MCF 10A (cell line): ENCODE measurements at regions of chr17 and their contacts with region 1.

Region 1: DNA sequence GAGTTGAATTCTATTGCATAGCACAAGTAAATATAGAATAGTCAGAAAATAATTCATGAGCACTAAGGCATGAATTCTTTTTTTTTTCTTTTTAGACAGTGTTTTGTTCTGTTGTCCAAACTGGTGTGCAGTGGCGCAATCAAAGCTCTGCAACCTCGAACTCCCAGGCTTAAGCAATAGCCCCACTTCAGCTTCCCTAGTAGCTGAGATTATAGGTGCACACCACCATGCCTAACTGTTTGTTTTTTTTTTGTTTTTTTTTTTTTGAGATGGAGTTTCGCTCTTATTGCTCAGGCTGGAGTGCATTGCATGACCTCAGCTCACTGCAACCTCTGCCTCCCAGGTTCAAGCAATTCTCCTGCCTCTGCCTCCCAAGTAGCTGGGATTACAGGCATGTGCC is 16.6 kb downstream of the TUBD1 start:
- DNase-seq: peak; percentile 38
- H3K4me3 Mint-ChIP-seq: no peak overlapping the region
- H3K27ac Mint-ChIP-seq: no peak overlapping the region
- H3K4me1 Mint-ChIP-seq: no peaks in the 10 kb centered on the region
- H3K27me3 Mint-ChIP-seq: no peaks in the 10 kb centered on the region
- CTCF ChIP-seq: no peak

Region 2: GRCh38 chr17:59791603-59792457 is 84.3 kb before region 1 on chr17:
- CTCF ChIA-PET with region 1: no interaction called
- POLR2A ChIA-PET with region 1: no interaction called
- intact Hi-C with region 1: no loop called
- DNase-seq: no peak
- H3K4me3 Mint-ChIP-seq: no peak overlapping the region
- H3K27ac Mint-ChIP-seq: no peak overlapping the region
- H3K4me1 Mint-ChIP-seq: peaks cover 6% of the 10 kb centered on the region
- H3K27me3 Mint-ChIP-seq: no peaks in the 10 kb centered on the region
- CTCF ChIP-seq: no peak

Region 3: GRCh38 chr17:59892924-59893676 is 17.0 kb after region 1 on chr17 and contains the starts of genes RPS6KB1 and TUBD1:
- CTCF ChIA-PET with region 1: interaction called, 3 read pairs
- POLR2A ChIA-PET with region 1: interaction called, 10 read pairs
- intact Hi-C with region 1: no loop called
- DNase-seq: peak; percentile 98
- H3K4me3 Mint-ChIP-seq: peak within 1 kb of the TSS; percentile 94
- H3K27ac Mint-ChIP-seq: peak within 1 kb of the TSS; percentile 99
- H3K4me1 Mint-ChIP-seq: peaks cover 9% of the 10 kb centered on the region
- H3K27me3 Mint-ChIP-seq: no peaks in the 10 kb centered on the region
- CTCF ChIP-seq: no peak
- total RNA-seq, gene RPS6KB1: 37.4 and 48.4 TPM in 2 replicates
- total RNA-seq, gene TUBD1: 4.4 and 5.2 TPM in 2 replicates